CD8-positive, alpha-beta T cell (primary cell): ENCODE measurements at regions of chr1 and their contacts with region 1.

Region 1: DNA sequence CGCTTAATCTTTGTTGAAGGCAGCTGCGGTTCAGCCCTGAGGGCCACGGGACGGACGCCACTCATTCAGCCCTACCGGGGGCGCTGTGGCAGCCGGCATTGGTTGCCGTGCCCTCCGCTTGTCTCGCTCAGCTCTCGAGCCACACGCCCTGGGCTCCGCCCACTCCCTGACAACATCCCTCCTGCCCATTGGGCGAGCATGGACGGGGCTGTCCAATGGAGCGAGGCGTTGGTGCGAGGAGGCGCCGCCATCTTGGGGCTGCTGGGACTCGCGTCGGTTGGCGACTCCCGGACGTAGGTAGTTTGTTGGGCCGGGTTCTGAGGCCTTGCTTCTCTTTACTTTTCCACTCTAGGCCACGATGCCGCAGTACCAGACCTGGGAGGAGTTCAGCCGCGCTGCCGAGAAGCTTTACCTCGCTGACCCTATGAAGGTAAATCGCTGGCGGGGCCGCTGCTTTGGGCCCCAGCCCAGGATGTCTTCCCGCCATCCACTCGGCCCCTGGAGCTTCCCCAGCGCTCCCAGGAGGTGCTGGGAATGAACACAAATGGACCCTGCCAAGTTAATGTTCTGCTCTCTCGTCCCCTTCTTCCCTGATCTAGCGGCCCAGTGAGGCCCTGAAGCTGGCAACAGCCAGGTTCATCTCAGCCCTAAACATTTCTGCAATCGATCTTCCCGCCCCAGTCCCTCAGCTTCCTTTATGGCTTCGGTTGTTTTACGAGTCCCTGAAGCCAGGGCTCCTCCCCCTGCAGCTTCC is at the start of gene SRP9:
- DNase-seq: peak; percentile 98 to 100 (median 99)
- ATAC-seq: peak; percentile 93
- H3K4me3 ChIP-seq: peak within 1 kb of the TSS; percentile 63 to 76
- H3K4me3 Mint-ChIP-seq: no peak within 1 kb of the TSS
- H3K27ac ChIP-seq: peak within 1 kb of the TSS; percentile 90 to 96
- H3K27ac Mint-ChIP-seq: no peak within 1 kb of the TSS
- H3K4me1 ChIP-seq: peaks cover 57% of the 10 kb centered on the region
- H3K4me1 Mint-ChIP-seq: peaks cover 46% of the 10 kb centered on the region
- H3K27me3 ChIP-seq: no peaks in the 10 kb centered on the region
- H3K27me3 Mint-ChIP-seq: no peaks in the 10 kb centered on the region
- CTCF ChIP-seq: peak; percentile 70
- total RNA-seq, gene SRP9: 55.2 to 57.7 TPM

Region 2: DNA sequence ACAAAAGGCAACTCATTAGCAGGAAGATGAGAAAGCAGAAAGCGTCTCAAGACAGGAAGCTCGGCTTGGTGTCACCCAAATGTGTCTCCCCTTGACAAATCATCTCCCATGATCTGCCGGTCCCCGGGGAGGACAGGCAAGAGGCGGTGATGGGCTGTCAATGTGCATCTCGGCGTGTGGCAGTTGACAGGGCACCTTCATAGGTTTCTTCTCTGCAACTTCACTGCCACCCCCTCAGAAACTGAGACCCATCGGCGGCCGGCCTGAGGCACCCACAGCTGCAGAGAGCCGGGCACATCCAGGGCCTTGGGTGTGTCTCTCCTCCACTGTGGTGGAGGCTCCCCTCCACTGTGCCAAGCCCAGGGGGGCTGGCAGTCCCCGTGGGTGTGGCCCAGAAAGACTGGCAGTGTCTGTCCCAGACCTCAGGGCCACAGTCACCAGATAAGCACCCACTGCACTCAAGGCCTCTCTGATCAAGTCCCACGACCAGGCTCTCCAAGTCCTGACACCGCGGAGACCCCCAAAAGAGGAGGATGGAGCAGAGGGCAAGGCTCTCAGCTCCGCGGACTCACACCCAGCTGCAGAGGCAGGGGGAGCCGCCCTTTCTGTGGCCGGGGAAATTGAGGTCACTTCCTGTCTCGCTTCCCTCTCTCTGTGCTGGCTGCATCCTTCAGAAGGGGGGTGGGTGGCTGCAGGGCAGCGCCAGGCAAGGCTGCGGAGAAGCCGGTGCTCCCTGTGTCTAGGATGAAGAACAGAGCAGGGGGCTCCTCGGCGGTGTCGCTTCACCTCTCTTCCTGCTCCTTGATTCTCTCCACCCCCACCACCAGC is 310.4 kb before region 1 on chr1:
- CTCF ChIA-PET with region 1: interaction called, 3 read pairs
- POLR2A ChIA-PET with region 1: interaction called, 7 read pairs
- intact Hi-C with region 1: loop called in 1 of 2 experiments (anchors 2 kb)
- DNase-seq: peak; percentile 67 to 93 (median 86)
- ATAC-seq: peak; percentile 81
- H3K4me3 ChIP-seq: peak overlapping the region; percentile 60 to 86
- H3K4me3 Mint-ChIP-seq: peak overlapping the region; percentile 92
- H3K27ac ChIP-seq: peak overlapping the region; percentile 88 to 95
- H3K27ac Mint-ChIP-seq: peak overlapping the region; percentile 98
- H3K4me1 ChIP-seq: peaks cover 35% of the 10 kb centered on the region
- H3K4me1 Mint-ChIP-seq: peaks cover 43% of the 10 kb centered on the region
- H3K27me3 ChIP-seq: no peaks in the 10 kb centered on the region
- H3K27me3 Mint-ChIP-seq: no peaks in the 10 kb centered on the region
- CTCF ChIP-seq: no peak

Region 3: GRCh38 chr1:225838793-225839192 is 61.0 kb after region 1 on chr1:
- CTCF ChIA-PET with region 1: interaction called, 3 read pairs
- POLR2A ChIA-PET with region 1: interaction called, 13 read pairs
- intact Hi-C with region 1: no loop called
- DNase-seq: no peak
- ATAC-seq: no peak
- H3K4me3 ChIP-seq: no peak overlapping the region
- H3K4me3 Mint-ChIP-seq: no peak overlapping the region
- H3K27ac ChIP-seq: no peak overlapping the region
- H3K27ac Mint-ChIP-seq: no peak overlapping the region
- H3K4me1 ChIP-seq: peaks cover 16% of the 10 kb centered on the region
- H3K4me1 Mint-ChIP-seq: peaks cover 39% of the 10 kb centered on the region
- H3K27me3 ChIP-seq: no peaks in the 10 kb centered on the region
- H3K27me3 Mint-ChIP-seq: no peaks in the 10 kb centered on the region
- CTCF ChIP-seq: no peak

Region 4: GRCh38 chr1:225896937-225897549 is 119.3 kb after region 1 on chr1:
- CTCF ChIA-PET with region 1: interaction called, 5 read pairs
- POLR2A ChIA-PET with region 1: interaction called, 34 read pairs
- intact Hi-C with region 1: loop called in 1 of 2 experiments (anchors 1 kb)
- DNase-seq: peak; percentile 46 to 96 (median 71)
- ATAC-seq: peak; percentile 90
- H3K4me3 ChIP-seq: peak overlapping the region; percentile 18 to 38
- H3K4me3 Mint-ChIP-seq: peak overlapping the region; percentile 74
- H3K27ac ChIP-seq: peak overlapping the region; percentile 72 to 80
- H3K27ac Mint-ChIP-seq: peak overlapping the region; percentile 99
- H3K4me1 ChIP-seq: peaks cover 42% of the 10 kb centered on the region
- H3K4me1 Mint-ChIP-seq: peaks cover 56% of the 10 kb centered on the region
- H3K27me3 ChIP-seq: no peaks in the 10 kb centered on the region
- H3K27me3 Mint-ChIP-seq: no peaks in the 10 kb centered on the region
- CTCF ChIP-seq: no peak

Region 5: DNA sequence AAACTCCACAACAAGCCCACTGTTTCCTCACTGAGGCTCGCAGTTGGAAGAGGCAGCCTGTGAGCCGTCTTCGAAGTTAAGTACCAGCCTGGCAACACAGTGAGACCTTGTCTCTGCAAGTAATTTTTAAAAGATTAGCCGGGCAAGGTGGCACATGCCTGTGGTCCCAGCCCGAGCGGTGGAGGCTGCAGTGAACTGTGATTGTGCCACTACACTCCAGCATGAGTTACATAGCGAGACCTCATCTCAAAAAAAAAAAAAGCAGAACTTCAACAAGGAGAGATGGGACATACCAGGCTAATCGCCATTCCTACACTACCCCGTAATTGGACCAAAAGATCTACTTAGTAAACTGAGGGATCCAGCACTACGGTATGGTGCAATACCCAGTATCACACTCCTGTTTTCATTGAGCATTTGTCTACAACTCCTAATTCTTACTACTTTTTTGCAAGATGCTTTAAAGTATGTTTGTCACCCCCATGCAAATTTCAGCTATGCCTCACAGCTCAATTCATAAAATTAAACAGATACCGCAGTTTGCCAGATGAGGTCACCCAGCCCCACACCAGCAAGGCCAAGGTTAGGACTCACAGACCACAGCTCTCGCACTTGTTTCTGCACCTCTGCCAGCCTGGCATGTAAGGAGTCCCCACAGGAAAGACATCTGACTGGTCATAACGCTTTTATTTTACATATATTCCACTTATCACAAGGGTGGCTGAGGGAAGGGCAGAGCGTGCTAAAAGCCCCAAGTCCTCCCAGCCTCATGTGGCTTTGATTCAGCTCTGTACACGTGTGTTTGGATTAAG is 200.4 kb after region 1 on chr1:
- CTCF ChIA-PET with region 1: interaction called, 3 read pairs
- POLR2A ChIA-PET with region 1: no interaction called
- intact Hi-C with region 1: loop called in 1 of 2 experiments (anchors 5 kb)
- DNase-seq: peak in 3 of 9 experiments; percentile 27 to 45 (median 33)
- ATAC-seq: no peak
- H3K4me3 ChIP-seq: no peak overlapping the region
- H3K4me3 Mint-ChIP-seq: no peak overlapping the region
- H3K27ac ChIP-seq: no peak overlapping the region
- H3K27ac Mint-ChIP-seq: no peak overlapping the region
- H3K4me1 ChIP-seq: no peaks in the 10 kb centered on the region
- H3K4me1 Mint-ChIP-seq: peaks cover 4% of the 10 kb centered on the region
- H3K27me3 ChIP-seq: no peaks in the 10 kb centered on the region
- H3K27me3 Mint-ChIP-seq: no peaks in the 10 kb centered on the region
- CTCF ChIP-seq: no peak

Region 6: DNA sequence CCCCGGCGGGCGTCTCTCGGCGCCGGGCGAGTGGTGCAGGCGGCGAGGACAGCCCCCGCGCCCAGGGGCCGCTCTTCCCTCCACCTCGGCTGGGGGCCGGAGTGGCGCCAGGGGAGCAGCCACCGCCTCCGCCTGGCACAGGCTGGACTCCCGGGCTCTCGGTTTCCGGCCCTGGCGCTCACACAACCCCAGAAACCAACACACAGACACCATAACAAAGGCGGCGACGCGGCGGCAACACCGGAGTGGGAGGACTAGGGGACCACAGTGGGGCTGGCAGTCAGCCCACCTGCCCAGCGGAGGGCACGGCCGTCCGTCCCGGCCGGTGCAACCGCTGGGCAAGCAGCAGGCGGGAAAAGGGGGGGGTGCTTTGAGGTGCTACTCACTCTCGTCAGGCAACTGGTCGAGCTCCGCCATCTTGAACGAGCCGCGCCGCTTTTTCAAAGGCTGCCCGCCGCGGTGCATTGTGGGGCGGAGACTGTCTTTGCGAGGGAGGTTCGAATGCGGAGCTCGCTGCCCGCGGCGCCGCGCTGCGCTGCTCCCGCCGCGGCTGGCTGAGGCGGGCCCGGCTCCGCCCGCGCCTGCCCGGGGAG is 531.1 kb after region 1 on chr1 and contains the start of gene LIN9:
- CTCF ChIA-PET with region 1: no interaction called
- POLR2A ChIA-PET with region 1: no interaction called
- intact Hi-C with region 1: loop called in 1 of 2 experiments (anchors 5 kb)
- DNase-seq: peak; percentile 82 to 94 (median 91)
- ATAC-seq: peak; percentile 90
- H3K4me3 ChIP-seq: peak within 1 kb of the TSS; percentile 91 to 99
- H3K4me3 Mint-ChIP-seq: peak within 1 kb of the TSS; percentile 95
- H3K27ac ChIP-seq: peak within 1 kb of the TSS; percentile 49 to 56
- H3K27ac Mint-ChIP-seq: peak within 1 kb of the TSS; percentile 86
- H3K4me1 ChIP-seq: peaks cover 14% of the 10 kb centered on the region
- H3K4me1 Mint-ChIP-seq: peaks cover 22% of the 10 kb centered on the region
- H3K27me3 ChIP-seq: peaks cover 0 to 8% of the 10 kb centered on the region in 2 experiments
- H3K27me3 Mint-ChIP-seq: peaks cover 8% of the 10 kb centered on the region
- CTCF ChIP-seq: no peak
- total RNA-seq, gene LIN9: 1.1 to 1.3 TPM